PC-3 (cell line): ENCODE measurements at regions of chr17 and their contacts with region 1.

Region 1: DNA sequence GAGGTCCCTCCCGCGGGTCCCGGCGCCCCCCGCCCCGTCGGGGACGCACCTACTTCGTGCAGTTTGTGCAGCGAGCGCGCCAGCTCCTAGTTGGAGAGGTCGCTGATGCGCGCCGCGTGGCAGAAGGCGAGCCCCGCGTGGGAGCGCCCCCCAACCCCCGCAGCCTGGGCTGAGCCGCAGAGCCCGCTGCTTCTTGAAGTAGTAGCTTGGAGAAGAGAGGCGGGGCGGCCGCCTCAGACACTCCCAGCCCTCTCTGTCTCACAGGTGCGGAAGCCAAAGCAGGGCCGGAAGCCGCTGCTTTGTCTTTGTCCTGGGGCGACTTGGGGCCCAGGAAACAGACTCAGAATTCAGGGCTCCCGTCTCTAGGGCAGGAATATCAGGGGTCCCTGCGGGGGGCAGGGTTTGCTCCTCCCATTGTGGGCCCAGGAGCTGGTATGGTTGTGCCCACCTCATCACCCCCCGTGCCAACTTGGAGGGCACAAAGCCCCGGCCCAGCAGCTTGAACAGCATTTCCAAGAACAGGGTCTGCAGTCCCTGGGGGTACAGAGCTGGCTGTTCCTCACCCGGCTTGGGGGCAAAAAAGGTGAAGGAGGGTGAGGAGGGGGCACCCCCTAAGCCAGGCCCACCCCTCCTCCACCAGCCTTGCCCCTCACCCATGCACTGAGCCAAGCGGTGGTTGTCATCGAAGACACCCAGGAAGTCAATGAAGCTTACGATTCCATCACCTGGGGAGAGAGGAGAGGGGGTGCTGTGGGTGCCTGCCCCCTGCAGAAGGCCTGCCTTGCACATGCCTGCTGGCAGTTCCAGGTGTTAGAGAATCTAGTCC is 13.5 kb downstream of the SPATA32 start:
- DNase-seq: peak; percentile 83
- ATAC-seq: peak; percentile 59
- H3K4me3 ChIP-seq: peak overlapping the region; percentile 88
- H3K27ac ChIP-seq: peak overlapping the region; percentile 73
- H3K4me1 ChIP-seq: peaks cover 41% of the 10 kb centered on the region
- H3K27me3 ChIP-seq: no peaks in the 10 kb centered on the region
- CTCF ChIP-seq: no peak

Region 2: DNA sequence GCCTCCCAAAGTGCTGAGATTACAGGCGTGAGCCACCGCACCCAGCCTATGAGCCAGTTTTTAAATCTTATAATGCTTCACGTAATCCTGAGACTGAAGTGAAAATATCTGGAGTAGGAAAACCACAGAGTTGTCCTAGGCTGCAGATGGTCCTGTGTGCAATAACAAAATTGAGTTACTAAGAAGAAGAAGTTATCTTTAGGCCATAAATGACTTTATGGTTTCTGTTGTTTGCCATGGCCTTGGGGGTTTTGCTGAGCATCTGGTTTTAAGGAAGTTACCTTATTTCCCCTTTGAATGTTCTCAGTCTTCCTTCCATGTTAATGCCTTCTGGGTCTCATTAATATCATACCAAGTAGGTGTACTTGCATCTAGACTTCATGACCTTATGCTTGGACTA is 170.7 kb before region 1 on chr17:
- CTCF ChIA-PET with region 1: no interaction called
- POLR2A ChIA-PET with region 1: no interaction called
- intact Hi-C with region 1: no loop called
- DNase-seq: no peak
- ATAC-seq: no peak
- H3K4me3 ChIP-seq: no peak overlapping the region
- H3K27ac ChIP-seq: no peak overlapping the region
- H3K4me1 ChIP-seq: peaks cover 10% of the 10 kb centered on the region
- H3K27me3 ChIP-seq: no peaks in the 10 kb centered on the region
- CTCF ChIP-seq: no peak

Region 3: GRCh38 chr17:45123930-45124796 is 124.2 kb before region 1 on chr17:
- CTCF ChIA-PET with region 1: no interaction called
- POLR2A ChIA-PET with region 1: no interaction called
- intact Hi-C with region 1: no loop called
- DNase-seq: peak; percentile 96
- ATAC-seq: peak; percentile 80
- H3K4me3 ChIP-seq: no peak overlapping the region
- H3K27ac ChIP-seq: peak overlapping the region; percentile 94
- H3K4me1 ChIP-seq: peaks cover 55% of the 10 kb centered on the region
- H3K27me3 ChIP-seq: no peaks in the 10 kb centered on the region
- CTCF ChIP-seq: no peak

Region 4: DNA sequence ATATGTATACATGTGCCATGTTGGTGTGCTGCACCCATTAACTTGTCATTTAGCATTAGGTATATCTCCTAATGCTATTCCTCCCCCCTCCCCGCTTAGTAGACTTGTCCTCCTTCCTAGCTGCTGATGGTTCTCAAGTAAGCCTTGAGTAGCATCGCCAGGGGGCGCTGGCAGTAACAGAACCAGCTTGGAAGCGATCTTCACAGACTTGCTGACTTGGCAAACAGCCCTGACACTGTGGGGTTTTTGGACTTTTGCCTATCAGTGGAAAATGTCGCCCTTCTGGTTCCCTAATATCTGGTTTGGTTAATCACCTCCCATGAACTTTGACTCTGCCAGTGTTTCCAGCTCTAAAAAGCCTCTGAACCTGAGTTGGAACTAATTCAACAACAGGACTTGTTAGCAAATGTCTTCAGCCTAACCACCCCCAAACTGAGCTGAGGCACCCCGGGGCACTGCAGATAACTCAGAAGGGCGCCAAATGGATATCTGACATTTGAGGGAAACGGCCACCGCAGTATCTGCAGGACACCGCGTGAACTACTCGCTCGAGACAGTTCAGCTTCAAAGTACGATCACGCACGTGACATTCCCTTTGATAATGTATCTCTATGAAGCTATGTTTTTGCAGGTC is 29.0 kb after region 1 on chr17:
- CTCF ChIA-PET with region 1: no interaction called
- POLR2A ChIA-PET with region 1: no interaction called
- intact Hi-C with region 1: no loop called
- DNase-seq: peak; percentile 97
- ATAC-seq: peak; percentile 87
- H3K4me3 ChIP-seq: no peak overlapping the region
- H3K27ac ChIP-seq: no peak overlapping the region
- H3K4me1 ChIP-seq: peaks cover 9% of the 10 kb centered on the region
- H3K27me3 ChIP-seq: no peaks in the 10 kb centered on the region
- CTCF ChIP-seq: peak; percentile 90

Region 5: DNA sequence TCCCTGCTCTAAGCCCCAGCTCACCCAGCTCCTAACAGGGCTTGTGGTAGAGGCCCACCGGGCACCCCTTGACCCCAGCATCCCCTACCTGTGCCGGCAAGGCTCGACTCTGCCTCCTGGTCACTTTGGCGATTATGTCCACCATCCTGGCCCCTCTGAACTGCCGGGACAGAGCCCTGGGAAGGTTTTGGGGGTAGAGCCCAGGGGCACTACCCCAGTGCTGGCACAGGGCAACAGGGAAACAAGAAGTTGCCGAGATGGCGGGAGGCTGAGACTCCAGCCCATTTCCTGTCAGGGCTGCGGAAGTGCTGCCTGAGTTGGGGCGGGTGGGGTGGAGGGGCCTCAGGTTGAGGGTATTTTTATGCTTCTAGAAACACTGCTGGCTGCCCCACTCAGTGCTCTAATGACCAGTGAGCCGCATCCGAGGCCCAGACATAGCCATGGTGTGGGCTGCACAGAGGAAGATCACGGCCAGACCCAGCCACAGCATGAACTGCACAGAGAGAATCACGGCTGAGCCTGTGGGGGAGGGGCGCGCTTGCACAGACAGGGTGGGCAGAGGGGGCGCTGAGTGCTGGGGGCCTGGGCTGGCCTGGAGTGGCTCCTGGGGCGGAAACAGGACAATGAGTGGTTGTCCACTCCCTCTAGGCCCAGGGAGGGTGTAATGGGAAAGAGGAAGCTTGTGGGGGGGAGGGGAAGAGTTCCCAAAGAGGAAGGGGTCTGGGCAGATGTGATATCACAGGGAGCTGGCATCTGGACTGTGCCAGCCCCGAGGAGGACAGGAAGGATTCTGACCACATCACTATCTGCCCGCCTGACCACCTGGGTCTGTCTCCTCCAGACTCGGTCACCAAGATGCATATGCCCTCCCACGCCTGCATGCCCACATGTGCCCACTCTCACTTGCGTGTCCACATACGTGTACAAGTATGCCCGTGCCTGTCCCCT is 162.1 kb after region 1 on chr17:
- CTCF ChIA-PET with region 1: no interaction called
- POLR2A ChIA-PET with region 1: interaction called, 25 read pairs
- intact Hi-C with region 1: no loop called
- DNase-seq: no peak
- ATAC-seq: no peak
- H3K4me3 ChIP-seq: no peak overlapping the region
- H3K27ac ChIP-seq: no peak overlapping the region
- H3K4me1 ChIP-seq: no peaks in the 10 kb centered on the region
- H3K27me3 ChIP-seq: no peaks in the 10 kb centered on the region
- CTCF ChIP-seq: no peak